Activated CD4-positive, alpha-beta T cell treated with anti-CD3 and anti-CD28 coated beads, Interleukin-2, amount 10 ng/mL, durations not matched to agents 7 days and 5 days (primary cell): ENCODE measurements at regions of chr2 and their contacts with region 1.

Region 1: GRCh38 chr2:149885468-149885867 is 297.9 kb upstream of the MMADHC start:
- DNase-seq: no peak
- H3K4me3 Mint-ChIP-seq: no peak overlapping the region
- H3K27ac Mint-ChIP-seq: no peak overlapping the region
- H3K4me1 Mint-ChIP-seq: no peaks in the 10 kb centered on the region
- H3K27me3 Mint-ChIP-seq: no peaks in the 10 kb centered on the region

Region 2: DNA sequence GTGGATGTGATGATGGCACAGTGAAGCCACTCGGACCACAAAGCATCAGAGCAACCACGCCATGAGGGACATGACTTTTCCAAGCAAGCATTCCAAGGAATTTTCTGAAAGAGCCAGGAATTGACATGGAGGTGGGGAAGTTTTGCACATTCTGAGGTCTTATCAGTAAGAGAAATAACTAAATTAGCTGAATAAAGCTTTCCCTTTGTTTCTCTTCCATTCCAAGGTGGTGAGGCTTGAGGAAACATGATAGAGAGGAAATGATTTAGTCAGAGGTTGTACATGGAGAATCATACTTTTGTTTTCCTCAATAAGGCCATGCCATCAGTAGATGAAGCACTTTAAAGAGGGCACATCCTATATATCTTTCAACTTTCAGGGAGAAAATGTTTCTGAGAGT is 182.2 kb before region 1 on chr2:
- CTCF ChIA-PET with region 1: no interaction called
- POLR2A ChIA-PET with region 1: no interaction called
- DNase-seq: no peak
- H3K4me3 Mint-ChIP-seq: no peak overlapping the region
- H3K27ac Mint-ChIP-seq: no peak overlapping the region
- H3K4me1 Mint-ChIP-seq: no peaks in the 10 kb centered on the region
- H3K27me3 Mint-ChIP-seq: no peaks in the 10 kb centered on the region

Region 3: DNA sequence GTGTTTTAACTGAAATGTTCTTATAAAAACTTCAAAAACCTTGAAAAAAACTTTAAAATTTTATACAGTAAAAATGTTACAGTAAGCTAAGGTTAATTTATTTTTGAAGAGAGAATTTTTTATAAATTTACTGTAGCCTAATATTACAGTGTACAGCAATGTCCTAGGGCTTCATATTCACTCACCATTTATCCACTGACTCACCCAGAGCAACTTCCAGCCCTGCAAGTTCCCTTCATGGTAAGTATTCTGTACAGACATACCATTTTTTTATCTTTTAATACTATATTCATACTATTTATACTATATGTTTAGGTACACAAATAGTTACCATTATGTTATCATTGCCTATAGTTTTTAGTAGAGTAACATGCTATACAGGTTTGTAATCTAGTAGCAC is 98.8 kb after region 1 on chr2:
- CTCF ChIA-PET with region 1: no interaction called
- POLR2A ChIA-PET with region 1: interaction called, 10 read pairs
- DNase-seq: no peak
- H3K4me3 Mint-ChIP-seq: no peak overlapping the region
- H3K27ac Mint-ChIP-seq: no peak overlapping the region
- H3K4me1 Mint-ChIP-seq: no peaks in the 10 kb centered on the region
- H3K27me3 Mint-ChIP-seq: no peaks in the 10 kb centered on the region